ENCODE measurements at regions of chr20 and their contacts with region 1.

Region 1: DNA sequence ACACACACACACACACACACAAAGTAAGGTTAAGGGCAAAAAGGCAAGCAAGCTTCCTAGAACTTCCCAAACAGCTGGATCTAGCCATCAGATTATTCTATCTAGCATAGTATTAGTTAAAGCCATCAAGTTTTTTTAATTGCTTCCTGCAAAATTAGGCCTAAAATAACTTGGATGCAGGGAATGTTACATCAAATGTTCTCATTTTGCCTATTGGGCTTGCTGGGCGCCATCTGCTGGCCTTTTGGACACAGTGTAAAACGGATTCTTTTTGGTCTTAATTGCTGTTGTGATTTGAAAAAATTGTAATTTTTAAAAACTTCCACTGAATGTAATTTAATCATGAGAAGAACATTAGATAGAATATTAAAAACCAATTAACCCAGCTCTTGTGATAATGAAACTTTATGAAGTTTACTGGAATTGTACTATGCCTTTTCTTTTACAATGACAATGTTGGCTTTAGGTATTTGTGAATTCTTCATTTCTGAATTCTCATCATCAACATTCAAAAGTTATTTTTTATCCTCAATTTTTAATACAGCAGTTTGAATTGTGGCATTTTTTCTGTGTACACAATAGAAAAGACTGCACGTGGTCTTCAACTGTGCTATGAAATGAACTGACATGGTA is 6.8 kb downstream of the MKKS start:
- DNase-seq: peak; percentile 67
- ATAC-seq: peak; percentile 60; the same call in 1 of the 2 replicates
- H3K4me3 ChIP-seq: no peak overlapping the region
- H3K27ac ChIP-seq: no peak overlapping the region
- H3K4me1 ChIP-seq: peaks cover 24% of the 10 kb centered on the region
- H3K27me3 ChIP-seq: no peaks in the 10 kb centered on the region
- CTCF ChIP-seq: peak; percentile 96

Region 2: DNA sequence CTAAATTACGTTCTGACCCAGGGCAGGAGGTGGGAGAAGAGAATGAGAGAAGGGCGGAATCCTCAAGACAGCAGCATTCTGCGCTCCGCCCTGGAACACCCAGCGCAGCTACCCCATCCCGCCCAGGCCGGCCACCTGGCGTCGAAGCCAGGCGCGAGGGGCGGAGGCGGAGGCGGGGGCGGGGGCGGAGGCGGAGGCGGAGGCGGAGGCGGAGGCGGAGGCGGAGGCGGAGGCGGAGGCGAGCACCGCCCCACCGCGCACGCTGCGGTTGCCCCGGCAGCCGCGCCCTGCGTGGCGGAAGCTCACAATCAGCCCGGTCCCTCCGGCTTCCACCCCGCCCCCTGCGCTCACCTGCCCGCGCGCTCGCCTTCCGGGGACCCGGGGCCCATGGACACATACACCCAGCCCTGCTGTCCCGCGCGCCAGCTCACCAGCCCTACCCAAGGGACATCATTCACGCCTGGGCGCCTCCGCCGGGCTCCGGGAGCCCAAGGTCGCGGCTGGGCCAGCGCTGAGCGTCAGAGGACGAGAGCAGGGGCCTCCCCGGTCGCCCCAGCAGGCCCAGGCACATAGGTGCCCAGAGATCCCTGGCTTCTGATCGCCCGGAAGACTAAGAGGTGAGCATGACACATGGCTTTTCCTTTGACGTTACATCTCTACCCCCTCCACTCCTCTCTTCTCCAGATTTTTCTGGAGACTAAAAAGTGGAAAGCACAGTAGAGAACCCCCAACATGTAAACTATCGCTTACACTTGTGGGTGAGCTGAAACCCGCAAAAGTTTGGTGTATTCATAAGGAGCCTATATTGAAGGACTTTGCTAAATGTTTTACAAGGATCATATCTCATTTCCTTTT is 392.2 kb before region 1 on chr20 and contains the start of gene ANKEF1:
- CTCF ChIA-PET with region 1: no interaction called
- POLR2A ChIA-PET with region 1: no interaction called
- intact Hi-C with region 1: loop called (anchors 10 kb)
- DNase-seq: peak; percentile 94
- ATAC-seq: peak; percentile 98
- H3K4me3 ChIP-seq: peak within 1 kb of the TSS; percentile 84
- H3K27ac ChIP-seq: peak within 1 kb of the TSS; percentile 67
- H3K4me1 ChIP-seq: peaks cover 20% of the 10 kb centered on the region
- H3K27me3 ChIP-seq: peaks cover 13% of the 10 kb centered on the region
- CTCF ChIP-seq: no peak
- total RNA-seq, gene ANKEF1: 11.6 and 13.1 TPM in 2 replicates

Region 3: GRCh38 chr20:10090588-10091166 is 336.5 kb before region 1 on chr20:
- CTCF ChIA-PET with region 1: no interaction called
- POLR2A ChIA-PET with region 1: no interaction called
- intact Hi-C with region 1: loop called (anchors 1 kb)
- DNase-seq: peak; percentile 81
- ATAC-seq: peak; percentile 84
- H3K4me3 ChIP-seq: no peak overlapping the region
- H3K27ac ChIP-seq: no peak overlapping the region
- H3K4me1 ChIP-seq: peaks cover 19% of the 10 kb centered on the region
- H3K27me3 ChIP-seq: peaks cover 2% of the 10 kb centered on the region; the same call in 1 of the 2 replicates
- CTCF ChIP-seq: peak; percentile 93

Region 4: GRCh38 chr20:10316582-10316981 is 110.6 kb before region 1 on chr20:
- CTCF ChIA-PET with region 1: no interaction called
- POLR2A ChIA-PET with region 1: no interaction called
- intact Hi-C with region 1: loop called (anchors 1 kb)
- DNase-seq: peak; percentile 57
- ATAC-seq: peak; percentile 45
- H3K4me3 ChIP-seq: no peak overlapping the region
- H3K27ac ChIP-seq: no peak overlapping the region
- H3K4me1 ChIP-seq: no peaks in the 10 kb centered on the region
- H3K27me3 ChIP-seq: peaks cover 27% of the 10 kb centered on the region
- CTCF ChIP-seq: peak; percentile 73

Measured in PC-3 (cell line).